Esophagus muscularis mucosa (tissue), 4 donors: ENCODE measurements at regions of chr10 and their contacts with region 1.

Region 1: GRCh38 chr10:124388823-124389612 is 29.7 kb downstream of the OAT start:
- DNase-seq: peak; percentile 94
- H3K4me3 ChIP-seq: peak overlapping the region; percentile 56 to 59 (median 57)
- H3K27ac ChIP-seq: peak overlapping the region; percentile 24 to 69 (median 64)
- H3K4me1 ChIP-seq: peaks cover 5 to 21% (median 15%) of the 10 kb centered on the region in 4 donors
- H3K27me3 ChIP-seq: no peaks in the 10 kb centered on the region
- CTCF ChIP-seq: peak; percentile 94 to 99 (median 97)
- EP300 ChIP-seq: no peak
- POLR2A ChIP-seq: no peak

Region 2: DNA sequence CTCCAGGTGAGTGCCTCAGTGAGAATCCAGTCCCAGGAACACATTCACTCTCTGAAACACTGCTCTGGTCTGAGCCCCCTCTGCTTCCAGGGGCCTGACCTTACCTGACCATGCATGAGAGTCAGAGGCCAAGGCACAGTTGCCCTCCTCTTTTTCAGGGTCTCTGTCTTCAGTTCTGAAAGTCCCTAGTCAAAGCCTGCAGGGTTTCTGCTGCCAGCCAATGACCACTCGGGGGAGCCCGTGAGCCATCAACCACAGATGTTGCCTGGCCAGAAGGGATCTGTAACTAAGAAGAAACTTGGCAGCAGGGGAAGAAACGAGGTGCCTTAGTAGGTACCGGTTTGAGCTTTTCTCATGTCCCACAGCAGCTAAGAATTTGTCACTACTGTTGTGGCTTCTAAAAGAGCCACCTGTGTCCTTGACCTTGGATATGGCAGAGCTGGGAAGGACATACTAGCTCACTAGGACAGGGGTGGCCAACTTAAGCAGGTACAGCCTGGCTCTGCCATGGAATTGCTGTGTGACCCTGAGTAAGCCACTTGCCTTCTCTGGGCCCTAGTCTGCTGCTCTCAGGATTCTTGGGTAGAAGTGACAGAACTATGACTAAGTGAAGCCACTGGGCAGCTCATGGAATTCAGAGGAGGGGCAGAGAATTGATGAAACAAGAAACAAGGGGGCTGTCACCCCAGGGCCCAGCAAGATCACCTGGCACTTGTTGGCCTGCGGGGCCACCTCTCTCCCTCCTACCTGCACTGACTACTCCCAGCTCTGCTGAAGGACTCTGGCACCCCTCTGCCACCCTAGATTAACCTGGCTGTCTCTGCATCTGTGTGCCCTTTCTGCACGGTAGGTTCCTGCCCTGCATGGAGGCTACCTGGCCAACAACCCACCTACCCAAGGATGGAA is 806.7 kb before region 1 on chr10:
- intact Hi-C with region 1: loop called (anchors 5 kb)
- DNase-seq: peak; percentile 96
- H3K4me3 ChIP-seq: no peak overlapping the region
- H3K27ac ChIP-seq: no peak overlapping the region
- H3K4me1 ChIP-seq: peaks cover 7 to 25% (median 24%) of the 10 kb centered on the region in 4 donors
- H3K27me3 ChIP-seq: peaks cover 0 to 10% (median 2%) of the 10 kb centered on the region in 4 donors
- CTCF ChIP-seq: peak; percentile 82 to 85 (median 85)
- EP300 ChIP-seq: no peak
- POLR2A ChIP-seq: no peak

Region 3: GRCh38 chr10:123994417-123995081 is 394.5 kb before region 1 on chr10:
- intact Hi-C with region 1: loop called (anchors 1 kb)
- DNase-seq: peak; percentile 96
- H3K4me3 ChIP-seq: peak overlapping the region; percentile 30 to 43 (median 41)
- H3K27ac ChIP-seq: peak overlapping the region; percentile 54 to 71 (median 68)
- H3K4me1 ChIP-seq: peaks cover 21 to 53% (median 50%) of the 10 kb centered on the region in 4 donors
- H3K27me3 ChIP-seq: peaks cover 0 to 18% (median 8%) of the 10 kb centered on the region in 4 donors
- CTCF ChIP-seq: peak in 2 of 3 experiments; percentile 98 to 99
- EP300 ChIP-seq: no peak
- POLR2A ChIP-seq: no peak

Region 4: GRCh38 chr10:124106241-124106879 is 282.7 kb before region 1 on chr10:
- intact Hi-C with region 1: loop called (anchors 5 kb)
- DNase-seq: peak; percentile 96
- H3K4me3 ChIP-seq: peak overlapping the region; percentile 9 to 37 (median 18)
- H3K27ac ChIP-seq: peak overlapping the region; percentile 76 to 87 (median 84)
- H3K4me1 ChIP-seq: peaks cover 11 to 36% (median 34%) of the 10 kb centered on the region in 4 donors
- H3K27me3 ChIP-seq: no peaks in the 10 kb centered on the region
- CTCF ChIP-seq: no peak
- EP300 ChIP-seq: no peak
- POLR2A ChIP-seq: no peak

Region 5: DNA sequence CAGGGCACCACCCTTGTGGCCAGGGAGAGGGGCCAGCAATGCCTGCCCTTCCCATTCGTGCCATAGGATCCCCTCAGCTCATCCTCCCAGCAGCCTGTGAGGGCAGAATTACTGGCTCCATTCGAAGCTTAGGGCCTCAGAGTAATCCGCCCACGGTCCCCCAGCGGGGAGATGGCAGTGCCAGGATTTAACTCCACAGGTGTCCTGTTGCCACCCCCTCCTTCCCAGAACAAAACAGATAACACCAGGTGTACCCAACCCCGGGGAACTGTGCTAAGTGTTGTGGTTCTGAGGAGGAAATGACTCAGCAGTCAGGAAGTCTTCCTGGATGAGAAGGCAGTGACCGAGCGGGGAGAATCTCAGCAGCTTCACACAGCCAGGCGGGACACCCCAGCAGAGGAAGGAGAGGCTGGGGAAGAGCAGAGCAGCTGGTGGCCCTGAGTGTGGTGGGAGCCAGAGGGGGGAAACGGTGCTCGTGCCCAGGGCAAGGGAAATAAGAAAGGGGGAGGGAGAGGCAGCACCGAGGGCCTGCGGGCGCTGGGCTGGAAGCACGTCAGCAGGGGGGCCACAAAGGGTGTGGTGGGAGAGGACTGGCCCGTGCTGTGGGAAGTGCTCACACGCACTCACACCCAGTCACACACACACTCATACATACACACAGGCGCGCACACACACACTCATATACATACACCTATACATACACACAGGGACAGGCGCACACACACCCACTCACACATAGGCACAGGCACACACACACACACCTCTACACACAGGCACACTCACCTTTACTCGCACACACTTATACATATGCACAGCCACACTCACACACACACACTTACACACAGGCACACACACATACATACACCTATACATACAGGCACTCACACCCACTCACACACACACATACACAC is 235.8 kb before region 1 on chr10:
- intact Hi-C with region 1: loop called (anchors 10 kb)
- DNase-seq: no peak
- H3K4me3 ChIP-seq: no peak overlapping the region
- H3K27ac ChIP-seq: peak overlapping the region; percentile 61 to 78 (median 66)
- H3K4me1 ChIP-seq: peaks cover 43 to 57% (median 52%) of the 10 kb centered on the region in 4 donors
- H3K27me3 ChIP-seq: no peaks in the 10 kb centered on the region
- CTCF ChIP-seq: no peak
- EP300 ChIP-seq: peak; percentile 10
- POLR2A ChIP-seq: no peak

Region 6: DNA sequence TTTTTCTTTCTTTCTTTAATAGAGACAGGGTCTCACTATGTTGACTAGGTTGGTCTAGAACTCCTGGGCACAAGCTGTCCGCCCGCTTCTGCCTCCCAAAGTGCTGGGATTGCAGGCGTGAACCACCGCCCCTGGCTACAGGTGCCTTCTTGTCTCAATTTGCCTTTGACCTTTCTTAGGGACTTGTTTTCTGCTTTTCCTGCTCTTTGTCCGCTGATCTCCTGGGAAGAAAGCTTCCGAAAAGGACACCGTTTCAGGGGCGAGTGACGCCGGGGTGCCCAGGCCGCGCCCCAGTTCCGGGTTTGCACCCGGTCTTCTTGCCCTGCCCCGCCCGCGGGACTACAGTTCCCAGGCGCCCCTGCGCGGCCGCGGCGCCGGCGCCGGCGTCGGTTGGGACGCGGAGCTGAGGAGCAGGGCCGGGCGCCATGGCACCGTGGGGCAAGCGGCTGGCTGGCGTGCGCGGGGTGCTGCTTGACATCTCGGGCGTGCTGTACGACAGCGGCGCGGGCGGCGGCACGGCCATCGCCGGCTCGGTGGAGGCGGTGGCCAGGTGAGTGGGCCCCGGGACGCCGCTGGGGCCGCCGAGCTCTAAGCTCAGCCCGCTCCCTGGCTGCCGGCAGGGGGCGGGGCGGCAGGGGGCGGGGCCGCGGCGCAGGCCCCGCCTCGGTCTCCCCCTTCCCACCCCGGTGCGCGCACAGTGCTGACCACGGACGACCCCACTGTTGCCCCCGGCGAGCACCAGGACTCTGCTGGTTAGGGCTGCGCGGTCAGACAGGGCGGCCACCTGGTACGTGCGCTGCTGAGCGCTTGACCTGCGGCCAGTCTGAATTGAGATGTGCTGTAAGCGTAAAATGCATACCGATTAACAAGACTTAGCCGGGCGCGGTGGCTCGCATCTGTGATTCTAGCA is 72.7 kb after region 1 on chr10 and contains the start of gene LHPP:
- intact Hi-C with region 1: no loop called
- DNase-seq: peak; percentile 94
- H3K4me3 ChIP-seq: peak within 1 kb of the TSS; percentile 67 to 84 (median 78)
- H3K27ac ChIP-seq: peak within 1 kb of the TSS; percentile 85 to 90 (median 86)
- H3K4me1 ChIP-seq: peaks cover 3 to 15% (median 13%) of the 10 kb centered on the region in 4 donors
- H3K27me3 ChIP-seq: peaks cover 0 to 5% (median 0%) of the 10 kb centered on the region in 4 donors
- CTCF ChIP-seq: peak; percentile 61 to 66 (median 63)
- EP300 ChIP-seq: no peak
- POLR2A ChIP-seq: no peak
- total RNA-seq, gene LHPP: 10.8 to 20.9 (median 15.7) TPM